ENCODE measurements at regions of chr11 and their contacts with region 1.

Region 1: DNA sequence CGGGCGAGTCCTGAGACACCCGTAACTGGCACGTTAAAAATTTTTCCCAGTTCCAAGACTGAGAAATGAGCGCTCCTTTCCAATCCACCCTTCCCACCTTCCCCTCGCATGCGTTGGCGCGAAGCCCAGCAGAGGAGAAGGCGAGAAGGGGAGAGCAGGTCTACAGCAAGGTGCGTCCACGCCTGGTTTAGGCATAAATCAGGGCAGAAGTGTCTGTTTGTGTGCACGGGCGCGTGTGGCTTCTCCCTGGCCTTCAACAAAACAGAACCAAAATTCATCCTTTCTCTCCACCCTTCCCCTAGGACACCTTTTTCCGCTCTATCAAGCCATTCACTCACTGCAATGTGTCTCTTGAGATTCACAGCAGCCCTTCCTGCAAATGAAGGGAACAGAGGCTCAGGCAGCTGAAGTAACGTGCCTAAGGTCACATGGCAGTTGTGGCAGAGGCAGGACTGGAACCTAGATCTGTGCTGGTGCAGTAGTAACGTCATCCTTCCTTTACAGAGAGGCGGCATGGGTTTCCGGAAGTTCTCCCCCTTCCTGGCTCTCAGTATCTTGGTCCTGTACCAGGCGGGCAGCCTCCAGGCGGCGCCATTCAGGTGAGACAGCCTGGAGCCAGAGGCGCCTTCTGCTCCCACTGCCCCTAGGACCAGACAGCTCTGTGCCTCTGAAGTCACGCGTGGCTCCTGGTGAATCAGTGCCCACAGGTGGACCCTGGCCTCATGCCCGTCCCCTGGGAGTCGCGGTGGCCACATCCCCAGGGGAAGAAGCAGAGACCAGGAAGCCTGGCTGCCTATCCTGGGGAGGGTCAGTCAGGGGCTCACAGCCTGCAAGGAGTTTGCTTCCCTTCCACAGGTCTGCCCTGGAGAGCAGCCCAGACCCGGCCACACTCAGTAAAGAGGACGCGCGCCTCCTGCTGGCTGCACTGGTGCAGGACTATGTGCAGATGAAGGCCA is 1.1 kb downstream of the CALCB start:
- DNase-seq: peak; percentile 60 to 82 (median 65)
- H3K4me3 ChIP-seq: peak overlapping the region; percentile 67
- H3K4me3 Mint-ChIP-seq: peak overlapping the region; percentile 78 to 87 (median 84)
- H3K27ac ChIP-seq: no peak overlapping the region
- H3K27ac Mint-ChIP-seq: peak overlapping the region in 4 of 8 donors; percentile 26 to 62 (median 46)
- H3K4me1 ChIP-seq: peaks cover 15% of the 10 kb centered on the region
- H3K4me1 Mint-ChIP-seq: peaks cover 17 to 23% (median 17%) of the 10 kb centered on the region in 3 donors
- H3K27me3 ChIP-seq: no peaks in the 10 kb centered on the region
- H3K27me3 Mint-ChIP-seq: peaks cover 13 to 29% of the 10 kb centered on the region in 2 donors

Region 2: GRCh38 chr11:14519917-14520746 is 554.4 kb before region 1 on chr11 and contains the start of gene PSMA1:
- CTCF ChIA-PET with region 1: no interaction called
- POLR2A ChIA-PET with region 1: interaction called, 16 read pairs
- DNase-seq: peak; percentile 89 to 93 (median 89)
- H3K4me3 ChIP-seq: peak within 1 kb of the TSS; percentile 93
- H3K4me3 Mint-ChIP-seq: peak within 1 kb of the TSS; percentile 94 to 98 (median 97)
- H3K27ac ChIP-seq: peak within 1 kb of the TSS; percentile 83
- H3K27ac Mint-ChIP-seq: peak within 1 kb of the TSS; percentile 93 to 98 (median 96)
- H3K4me1 ChIP-seq: peaks cover 24% of the 10 kb centered on the region
- H3K4me1 Mint-ChIP-seq: peaks cover 33 to 40% (median 36%) of the 10 kb centered on the region in 3 donors
- H3K27me3 ChIP-seq: no peaks in the 10 kb centered on the region
- H3K27me3 Mint-ChIP-seq: no peaks in the 10 kb centered on the region
- total RNA-seq, gene PSMA1: 337 to 344 TPM

Region 3: GRCh38 chr11:14892036-14892567 is 182.4 kb before region 1 on chr11 and contains the start of gene CYP2R1:
- CTCF ChIA-PET with region 1: interaction called, 11 read pairs
- POLR2A ChIA-PET with region 1: no interaction called
- DNase-seq: peak; percentile 81 to 92 (median 89)
- H3K4me3 ChIP-seq: peak within 1 kb of the TSS; percentile 90
- H3K4me3 Mint-ChIP-seq: peak within 1 kb of the TSS; percentile 92 to 98 (median 97)
- H3K27ac ChIP-seq: peak within 1 kb of the TSS; percentile 83
- H3K27ac Mint-ChIP-seq: peak within 1 kb of the TSS; percentile 91 to 99 (median 97)
- H3K4me1 ChIP-seq: peaks cover 23% of the 10 kb centered on the region
- H3K4me1 Mint-ChIP-seq: peaks cover 25 to 44% (median 39%) of the 10 kb centered on the region in 3 donors
- H3K27me3 ChIP-seq: no peaks in the 10 kb centered on the region
- H3K27me3 Mint-ChIP-seq: peaks cover 0 to 2% of the 10 kb centered on the region in 2 donors
- total RNA-seq, gene CYP2R1: 5.6 to 5.9 TPM

Region 4: DNA sequence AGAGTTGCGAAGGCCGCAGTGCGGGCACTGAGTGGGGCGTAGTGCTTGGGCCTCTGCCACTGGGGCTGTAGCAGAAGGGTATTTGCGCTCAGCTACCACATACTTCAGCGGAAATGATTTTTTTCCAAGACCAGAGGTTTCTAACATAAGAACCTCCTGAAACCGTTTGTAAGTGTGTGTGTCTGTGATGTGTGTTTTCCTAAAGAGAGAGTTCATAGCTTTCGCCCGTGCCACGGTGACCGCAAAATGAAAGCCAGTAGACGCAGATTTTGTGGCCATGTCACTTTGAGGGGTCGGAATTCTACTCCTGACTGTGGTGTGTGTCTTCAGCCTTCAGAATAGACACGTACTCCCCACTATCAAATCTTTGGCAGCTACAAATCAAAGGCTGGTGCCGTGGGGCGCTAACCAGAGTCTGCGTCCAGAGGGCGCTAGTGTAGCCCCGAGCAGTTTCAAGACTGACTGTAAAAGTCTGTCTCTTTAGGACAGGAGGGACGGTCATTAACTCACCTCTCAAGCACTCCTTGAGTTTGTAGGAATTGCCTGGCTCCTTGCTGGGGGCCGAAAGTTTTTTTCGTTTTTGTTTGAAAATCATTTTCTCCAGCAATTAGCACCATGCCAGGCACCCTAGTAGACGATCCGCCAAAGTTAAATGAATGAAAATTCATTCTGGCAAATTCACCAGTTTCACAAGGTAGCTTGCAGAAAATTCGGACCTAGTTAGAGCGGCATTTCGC is 99.8 kb before region 1 on chr11:
- CTCF ChIA-PET with region 1: interaction called, 11 read pairs
- POLR2A ChIA-PET with region 1: no interaction called
- DNase-seq: peak in 4 of 5 donors; percentile 27 to 62 (median 44)
- H3K4me3 ChIP-seq: peak overlapping the region; percentile 26
- H3K4me3 Mint-ChIP-seq: peak overlapping the region; percentile 74 to 85 (median 80)
- H3K27ac ChIP-seq: no peak overlapping the region
- H3K27ac Mint-ChIP-seq: no peak overlapping the region
- H3K4me1 ChIP-seq: peaks cover 25% of the 10 kb centered on the region
- H3K4me1 Mint-ChIP-seq: peaks cover 32 to 35% (median 33%) of the 10 kb centered on the region in 3 donors
- H3K27me3 ChIP-seq: peaks cover 45% of the 10 kb centered on the region
- H3K27me3 Mint-ChIP-seq: peaks cover 53 to 72% of the 10 kb centered on the region in 2 donors

Region 5: GRCh38 chr11:15216678-15217077 is 142.2 kb after region 1 on chr11:
- CTCF ChIA-PET with region 1: no interaction called
- POLR2A ChIA-PET with region 1: no interaction called
- DNase-seq: no peak
- H3K4me3 ChIP-seq: no peak overlapping the region
- H3K4me3 Mint-ChIP-seq: no peak overlapping the region
- H3K27ac ChIP-seq: no peak overlapping the region
- H3K27ac Mint-ChIP-seq: peak overlapping the region in 1 of 8 donors; percentile 47
- H3K4me1 ChIP-seq: no peaks in the 10 kb centered on the region
- H3K4me1 Mint-ChIP-seq: no peaks in the 10 kb centered on the region
- H3K27me3 ChIP-seq: no peaks in the 10 kb centered on the region
- H3K27me3 Mint-ChIP-seq: peaks cover 3 to 5% of the 10 kb centered on the region in 2 donors

Measured in CD8-positive, alpha-beta memory T cell (primary cell).